ENCODE measurements at regions of chr22 and their contacts with region 1.

Region 1: GRCh38 chr22:42856865-42857704 is at the start of gene ARFGAP3:
- DNase-seq: peak; percentile 98
- ATAC-seq: peak; percentile 93
- H3K4me3 ChIP-seq: peak within 1 kb of the TSS; percentile 65 to 82 (median 77)
- H3K4me3 Mint-ChIP-seq: peak within 1 kb of the TSS; percentile 86
- H3K27ac ChIP-seq: peak within 1 kb of the TSS; percentile 83 to 86
- H3K27ac Mint-ChIP-seq: peak within 1 kb of the TSS; percentile 88
- H3K4me1 ChIP-seq: peaks cover 27 to 42% of the 10 kb centered on the region in 2 donors
- H3K4me1 Mint-ChIP-seq: peaks cover 30% of the 10 kb centered on the region
- H3K27me3 ChIP-seq: no peaks in the 10 kb centered on the region
- H3K27me3 Mint-ChIP-seq: no peaks in the 10 kb centered on the region
- CTCF ChIP-seq: no peak
- total RNA-seq, gene ARFGAP3: 33.2 and 35.2 TPM in 2 replicates

Region 2: GRCh38 chr22:42655693-42656092 is 201.4 kb before region 1 on chr22:
- CTCF ChIA-PET with region 1: no interaction called
- POLR2A ChIA-PET with region 1: interaction called, 6 read pairs
- intact Hi-C with region 1: loop called (anchors 5 kb)
- DNase-seq: peak; percentile 92
- ATAC-seq: peak; percentile 95
- H3K4me3 ChIP-seq: peak overlapping the region in 1 of 5 experiments; percentile 23
- H3K4me3 Mint-ChIP-seq: peak overlapping the region; percentile 80
- H3K27ac ChIP-seq: peak overlapping the region; percentile 61 to 91
- H3K27ac Mint-ChIP-seq: peak overlapping the region; percentile 94
- H3K4me1 ChIP-seq: peaks cover 35 to 48% of the 10 kb centered on the region in 2 donors
- H3K4me1 Mint-ChIP-seq: peaks cover 36% of the 10 kb centered on the region
- H3K27me3 ChIP-seq: no peaks in the 10 kb centered on the region
- H3K27me3 Mint-ChIP-seq: no peaks in the 10 kb centered on the region
- CTCF ChIP-seq: no peak

Region 3: DNA sequence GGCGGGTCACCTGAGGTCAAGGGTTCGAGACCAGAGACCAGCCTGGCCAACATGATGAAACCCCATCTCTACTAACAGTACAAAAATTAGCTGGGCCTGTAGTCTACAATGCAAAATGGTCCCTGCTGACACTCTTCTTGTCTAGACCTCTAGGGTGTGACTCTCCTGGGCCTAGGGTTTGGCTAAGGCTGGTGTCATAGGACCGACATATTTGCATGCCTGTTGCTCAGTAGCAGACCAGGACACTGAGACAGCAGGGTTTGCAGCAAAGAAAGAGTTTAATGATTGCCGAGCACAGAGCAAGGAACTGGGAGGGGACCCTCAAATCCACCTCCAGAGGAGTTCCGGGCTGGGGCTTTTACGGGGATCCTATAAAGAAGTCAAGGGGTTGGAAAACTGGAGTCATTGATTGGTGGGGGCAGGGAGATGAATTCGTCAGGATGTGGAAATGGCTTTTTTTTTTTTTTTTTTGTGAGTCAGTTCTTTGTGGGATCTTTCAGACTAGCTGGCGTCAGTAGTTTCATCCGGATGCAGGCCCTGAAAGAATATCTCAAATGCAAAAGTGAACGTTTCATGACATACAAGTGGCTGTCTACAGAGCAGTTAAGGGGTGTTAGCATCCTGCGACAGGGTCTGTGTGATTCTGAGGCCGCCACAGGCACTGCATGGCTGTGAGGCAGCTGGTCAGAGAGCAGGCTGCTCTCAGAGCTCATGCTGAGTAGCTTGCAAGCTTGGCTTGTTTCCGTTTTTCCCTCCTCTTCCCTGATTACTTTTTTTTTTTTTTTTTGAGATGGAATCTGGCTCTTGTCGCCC is 109.2 kb before region 1 on chr22:
- CTCF ChIA-PET with region 1: no interaction called
- POLR2A ChIA-PET with region 1: no interaction called
- intact Hi-C with region 1: no loop called
- DNase-seq: no peak
- ATAC-seq: peak; percentile 43
- H3K4me3 ChIP-seq: no peak overlapping the region
- H3K4me3 Mint-ChIP-seq: no peak overlapping the region
- H3K27ac ChIP-seq: no peak overlapping the region
- H3K27ac Mint-ChIP-seq: no peak overlapping the region
- H3K4me1 ChIP-seq: no peaks in the 10 kb centered on the region
- H3K4me1 Mint-ChIP-seq: peaks cover 8% of the 10 kb centered on the region
- H3K27me3 ChIP-seq: no peaks in the 10 kb centered on the region
- H3K27me3 Mint-ChIP-seq: no peaks in the 10 kb centered on the region
- CTCF ChIP-seq: no peak

Region 4: GRCh38 chr22:43014869-43015676 is 158.0 kb after region 1 on chr22 and contains the start of gene PACSIN2:
- CTCF ChIA-PET with region 1: no interaction called
- POLR2A ChIA-PET with region 1: interaction called, 3 read pairs
- intact Hi-C with region 1: loop called (anchors 2 kb)
- DNase-seq: peak; percentile 98
- ATAC-seq: peak; percentile 98
- H3K4me3 ChIP-seq: peak within 1 kb of the TSS; percentile 73 to 96 (median 77)
- H3K4me3 Mint-ChIP-seq: peak within 1 kb of the TSS; percentile 98
- H3K27ac ChIP-seq: peak within 1 kb of the TSS; percentile 66 to 80
- H3K27ac Mint-ChIP-seq: peak within 1 kb of the TSS; percentile 98
- H3K4me1 ChIP-seq: peaks cover 13 to 19% of the 10 kb centered on the region in 2 donors
- H3K4me1 Mint-ChIP-seq: peaks cover 32% of the 10 kb centered on the region
- H3K27me3 ChIP-seq: no peaks in the 10 kb centered on the region
- H3K27me3 Mint-ChIP-seq: no peaks in the 10 kb centered on the region
- CTCF ChIP-seq: no peak
- total RNA-seq, gene PACSIN2: 59.3 and 60.3 TPM in 2 replicates

Measured in B cell (primary cell).